Vagina (tissue), 2 donors: ENCODE measurements at regions of chr4 and their contacts with region 1.

Region 1: DNA sequence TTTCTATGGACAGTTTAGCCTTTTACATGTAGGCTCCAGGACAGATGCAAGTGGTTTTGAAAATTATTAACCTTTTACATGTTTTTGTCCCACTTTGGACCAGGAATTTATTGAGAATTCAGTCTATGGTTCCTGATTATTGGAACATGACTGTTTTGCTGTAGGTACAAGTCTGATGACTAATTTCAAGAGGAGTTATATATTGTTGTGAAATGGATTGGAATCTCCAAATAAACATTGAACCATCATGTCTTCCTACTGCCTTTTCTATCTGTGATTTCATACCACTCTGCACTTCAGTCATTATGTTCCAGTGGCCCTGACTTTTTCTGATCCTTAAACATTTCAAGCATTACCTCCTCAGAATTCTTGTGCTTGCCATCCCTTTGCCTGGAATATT is 35.9 kb downstream of the TBC1D19 start:
- DNase-seq: no peak
- H3K4me3 ChIP-seq: no peak overlapping the region
- H3K27ac ChIP-seq: no peak overlapping the region
- H3K4me1 ChIP-seq: peaks cover 5% of the 10 kb centered on the region
- H3K27me3 ChIP-seq: no peaks in the 10 kb centered on the region
- CTCF ChIP-seq: no peak
- POLR2A ChIP-seq: no peak

Region 2: GRCh38 chr4:26542991-26543390 is 76.8 kb before region 1 on chr4:
- intact Hi-C with region 1: loop called (anchors 2 kb)
- DNase-seq: no peak
- H3K4me3 ChIP-seq: no peak overlapping the region
- H3K27ac ChIP-seq: no peak overlapping the region
- H3K4me1 ChIP-seq: no peaks in the 10 kb centered on the region
- H3K27me3 ChIP-seq: no peaks in the 10 kb centered on the region
- CTCF ChIP-seq: no peak
- POLR2A ChIP-seq: no peak